ENCODE measurements at regions of chr4 and their contacts with region 1.

Region 1: DNA sequence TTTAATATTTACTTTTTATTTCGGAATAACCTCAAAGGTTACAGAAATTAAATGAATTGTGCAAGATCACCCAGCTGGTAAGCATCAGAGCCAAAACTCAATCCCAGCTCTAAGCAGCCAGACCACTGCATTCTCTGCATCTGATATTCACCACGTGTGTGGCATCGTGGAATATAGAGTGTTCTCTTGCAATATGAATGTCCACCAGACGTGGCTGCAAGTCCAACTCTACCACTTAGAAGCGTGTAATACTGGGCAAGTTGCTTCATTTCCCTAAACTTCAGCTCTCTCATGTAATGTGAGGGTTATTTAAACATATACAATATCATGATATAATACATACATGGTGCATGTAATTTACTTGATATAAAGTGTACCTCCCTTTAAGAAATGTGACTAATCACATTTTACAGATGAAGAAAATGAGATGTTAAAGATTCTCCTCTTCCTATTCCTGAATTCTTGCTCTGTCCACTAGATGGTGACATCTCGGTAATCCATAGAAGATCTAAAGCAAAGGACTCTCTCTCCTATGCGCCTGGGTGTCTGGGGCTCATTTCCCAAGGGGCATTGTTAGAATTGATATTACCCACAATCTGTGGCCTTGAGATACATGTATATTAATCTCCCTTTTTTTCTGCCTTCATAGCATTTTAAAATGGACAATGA is 805.1 kb downstream of the RAB28 start:
- DNase-seq: no peak
- H3K4me3 ChIP-seq: no peak overlapping the region
- H3K27ac ChIP-seq: no peak overlapping the region
- H3K4me1 ChIP-seq: no peaks in the 10 kb centered on the region
- H3K27me3 ChIP-seq: no peaks in the 10 kb centered on the region
- CTCF ChIP-seq: peak; percentile 31 to 37

Region 2: GRCh38 chr4:12421364-12421763 is 257.7 kb before region 1 on chr4:
- CTCF ChIA-PET with region 1: no interaction called
- dilution Hi-C with region 1: no loop called
- in situ Hi-C with region 1: no loop called
- intact Hi-C with region 1: no loop called
- DNase-seq: peak; percentile 3
- H3K4me3 ChIP-seq: no peak overlapping the region
- H3K27ac ChIP-seq: no peak overlapping the region
- H3K4me1 ChIP-seq: no peaks in the 10 kb centered on the region
- H3K27me3 ChIP-seq: no peaks in the 10 kb centered on the region
- CTCF ChIP-seq: no peak

Region 3: GRCh38 chr4:13548984-13549546 is 870.0 kb after region 1 on chr4:
- CTCF ChIA-PET with region 1: no interaction called
- dilution Hi-C with region 1: no loop called
- in situ Hi-C with region 1: no loop called
- intact Hi-C with region 1: loop called (anchors 2 kb)
- DNase-seq: peak; percentile 70
- H3K4me3 ChIP-seq: peak overlapping the region; percentile 49 to 53 (median 49)
- H3K27ac ChIP-seq: no peak overlapping the region
- H3K4me1 ChIP-seq: peaks cover 16% of the 10 kb centered on the region
- H3K27me3 ChIP-seq: peaks cover 12% of the 10 kb centered on the region
- CTCF ChIP-seq: peak; percentile 77 to 93